Activated CD4-positive, alpha-beta memory T cell treated with anti-CD3 and anti-CD28 coated beads, Interleukin-2, amount 10 ng/mL, durations not matched to agents 7 days and 5 days (primary cell): ENCODE measurements at regions of chr1 and their contacts with region 1.

Region 1: DNA sequence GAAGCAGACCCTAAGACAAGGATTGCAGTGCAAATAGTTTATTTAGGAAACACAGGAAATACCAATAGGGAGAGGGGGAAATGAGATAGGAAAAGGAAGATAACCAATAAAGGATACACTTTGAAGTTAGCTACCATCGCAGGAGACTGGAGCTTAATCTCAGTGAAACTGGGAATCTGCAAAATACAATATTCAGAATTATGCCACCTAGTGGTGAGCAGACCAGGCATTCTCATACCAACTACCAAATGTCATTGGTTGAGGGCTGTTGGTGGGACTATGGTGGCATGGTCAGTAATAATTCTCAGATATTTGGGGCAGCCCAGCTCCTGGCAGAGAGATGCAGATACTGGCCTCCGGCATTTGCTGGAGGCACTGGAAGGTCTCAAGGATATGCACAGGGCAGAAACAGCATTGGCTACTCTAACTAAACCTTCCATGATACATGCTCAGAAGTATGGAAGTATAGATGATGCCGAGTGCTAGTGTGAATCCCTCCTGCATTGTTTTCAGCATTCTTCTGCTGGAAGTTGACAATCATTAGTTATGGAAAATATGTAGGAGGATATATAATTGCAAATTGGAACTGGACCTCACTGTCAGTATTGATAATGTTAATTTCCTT is 11.8 kb upstream of the ZFP69B start:
- DNase-seq: no peak
- H3K4me3 Mint-ChIP-seq: no peak overlapping the region
- H3K27ac Mint-ChIP-seq: no peak overlapping the region
- H3K4me1 Mint-ChIP-seq: no peaks in the 10 kb centered on the region
- H3K27me3 Mint-ChIP-seq: no peaks in the 10 kb centered on the region

Region 2: GRCh38 chr1:40107290-40108262 is 330.9 kb before region 1 on chr1:
- CTCF ChIA-PET with region 1: no interaction called
- POLR2A ChIA-PET with region 1: no interaction called
- DNase-seq: no peak
- H3K4me3 Mint-ChIP-seq: no peak overlapping the region
- H3K27ac Mint-ChIP-seq: no peak overlapping the region
- H3K4me1 Mint-ChIP-seq: peaks cover 3% of the 10 kb centered on the region
- H3K27me3 Mint-ChIP-seq: peaks cover 15% of the 10 kb centered on the region

Region 3: GRCh38 chr1:40143891-40144575 is 294.5 kb before region 1 on chr1:
- CTCF ChIA-PET with region 1: interaction called, 11 read pairs
- POLR2A ChIA-PET with region 1: no interaction called
- DNase-seq: peak; percentile 54
- H3K4me3 Mint-ChIP-seq: no peak overlapping the region
- H3K27ac Mint-ChIP-seq: no peak overlapping the region
- H3K4me1 Mint-ChIP-seq: peaks cover 22% of the 10 kb centered on the region
- H3K27me3 Mint-ChIP-seq: peaks cover 39% of the 10 kb centered on the region

Region 4: DNA sequence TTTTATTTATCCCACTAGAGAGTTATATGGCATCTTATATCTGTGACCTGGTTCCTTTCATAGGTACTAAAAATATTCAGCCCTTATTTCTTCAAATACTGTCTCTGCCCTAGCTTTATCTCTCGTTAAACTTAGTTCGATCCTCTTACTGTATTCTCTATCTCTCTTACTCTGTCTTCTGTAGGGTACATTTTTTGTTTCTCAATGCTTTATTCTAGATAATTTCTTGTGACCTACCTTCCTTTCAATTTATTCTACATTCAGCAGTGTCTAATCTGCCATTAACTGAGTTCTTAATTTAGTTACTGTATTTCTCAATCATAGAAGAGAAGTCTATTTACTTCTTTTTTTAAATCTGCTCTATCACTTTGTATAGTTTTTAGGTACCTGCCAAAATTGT is 36.8 kb after region 1 on chr1:
- CTCF ChIA-PET with region 1: no interaction called
- POLR2A ChIA-PET with region 1: no interaction called
- DNase-seq: no peak
- H3K4me3 Mint-ChIP-seq: no peak overlapping the region
- H3K27ac Mint-ChIP-seq: no peak overlapping the region
- H3K4me1 Mint-ChIP-seq: peaks cover 17% of the 10 kb centered on the region
- H3K27me3 Mint-ChIP-seq: no peaks in the 10 kb centered on the region